Activated naive CD4-positive, alpha-beta T cell treated with anti-CD3 and anti-CD28 coated beads for 36 hours (primary cell): ENCODE measurements at regions of chr7 and their contacts with region 1.

Region 1: GRCh38 chr7:29091715-29092114 is 54.6 kb downstream of the CPVL start:
- DNase-seq: peak; percentile 21
- H3K4me3 Mint-ChIP-seq: peak overlapping the region; percentile 78
- H3K27ac Mint-ChIP-seq: peak overlapping the region; percentile 86
- H3K4me1 Mint-ChIP-seq: peaks cover 13% of the 10 kb centered on the region
- H3K27me3 Mint-ChIP-seq: peaks cover 3% of the 10 kb centered on the region

Region 2: DNA sequence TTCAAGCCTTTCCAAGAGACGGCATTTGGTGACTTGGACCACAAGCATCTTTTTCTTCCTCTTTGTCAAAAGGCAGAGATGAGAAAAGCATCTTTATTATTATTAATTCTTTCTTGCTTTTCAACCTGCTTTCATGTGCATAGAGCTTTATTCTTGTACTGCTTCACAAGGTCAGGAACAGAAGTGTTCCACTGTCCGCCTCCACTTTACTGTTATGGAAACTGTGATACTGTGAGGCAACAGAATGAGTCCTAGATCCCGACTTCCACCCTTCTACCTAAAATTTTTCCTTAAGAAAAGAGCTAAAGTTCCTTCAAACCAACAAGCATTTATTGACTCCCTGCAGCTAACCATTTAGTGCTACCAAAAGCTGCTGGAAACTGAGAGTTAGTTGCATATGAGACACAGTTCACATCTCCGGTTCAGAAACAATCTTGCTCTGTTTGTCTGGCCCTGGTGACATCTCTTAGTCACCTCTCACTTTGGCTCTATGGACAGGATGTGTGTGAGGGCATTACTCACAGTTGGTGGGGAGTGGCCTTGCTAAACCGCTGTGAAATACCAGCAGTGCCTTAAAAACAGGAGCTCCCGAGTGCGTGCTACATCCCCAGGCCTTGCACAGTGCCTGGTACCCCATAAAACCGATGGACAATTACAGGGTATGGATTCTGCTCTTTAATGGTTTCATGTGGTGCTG is 56.5 kb before region 1 on chr7:
- CTCF ChIA-PET with region 1: no interaction called
- intact Hi-C with region 1: loop called (anchors 5 kb)
- DNase-seq: peak; percentile 33
- H3K4me3 Mint-ChIP-seq: no peak overlapping the region
- H3K27ac Mint-ChIP-seq: no peak overlapping the region
- H3K4me1 Mint-ChIP-seq: peaks cover 9% of the 10 kb centered on the region
- H3K27me3 Mint-ChIP-seq: no peaks in the 10 kb centered on the region

Region 3: GRCh38 chr7:29053105-29053872 is 38.4 kb before region 1 on chr7:
- CTCF ChIA-PET with region 1: no interaction called
- intact Hi-C with region 1: loop called (anchors 5 kb)
- DNase-seq: peak; percentile 12
- H3K4me3 Mint-ChIP-seq: no peak overlapping the region
- H3K27ac Mint-ChIP-seq: no peak overlapping the region
- H3K4me1 Mint-ChIP-seq: peaks cover 2% of the 10 kb centered on the region
- H3K27me3 Mint-ChIP-seq: peaks cover 3% of the 10 kb centered on the region